HEK293 (cell line): ENCODE measurements at regions of chr7 and their contacts with region 1.

Region 1: GRCh38 chr7:150974468-150975391 is 3.4 kb downstream of the KCNH2 start:
- H3K4me3 ChIP-seq: peak overlapping the region; percentile 51
- H3K27ac ChIP-seq: peak overlapping the region; percentile 32; the same call in 1 of the 2 replicates
- H3K4me1 ChIP-seq: no peaks in the 10 kb centered on the region; the same call in 1 of the 2 replicates
- CTCF ChIP-seq: peak; percentile 80

Region 2: DNA sequence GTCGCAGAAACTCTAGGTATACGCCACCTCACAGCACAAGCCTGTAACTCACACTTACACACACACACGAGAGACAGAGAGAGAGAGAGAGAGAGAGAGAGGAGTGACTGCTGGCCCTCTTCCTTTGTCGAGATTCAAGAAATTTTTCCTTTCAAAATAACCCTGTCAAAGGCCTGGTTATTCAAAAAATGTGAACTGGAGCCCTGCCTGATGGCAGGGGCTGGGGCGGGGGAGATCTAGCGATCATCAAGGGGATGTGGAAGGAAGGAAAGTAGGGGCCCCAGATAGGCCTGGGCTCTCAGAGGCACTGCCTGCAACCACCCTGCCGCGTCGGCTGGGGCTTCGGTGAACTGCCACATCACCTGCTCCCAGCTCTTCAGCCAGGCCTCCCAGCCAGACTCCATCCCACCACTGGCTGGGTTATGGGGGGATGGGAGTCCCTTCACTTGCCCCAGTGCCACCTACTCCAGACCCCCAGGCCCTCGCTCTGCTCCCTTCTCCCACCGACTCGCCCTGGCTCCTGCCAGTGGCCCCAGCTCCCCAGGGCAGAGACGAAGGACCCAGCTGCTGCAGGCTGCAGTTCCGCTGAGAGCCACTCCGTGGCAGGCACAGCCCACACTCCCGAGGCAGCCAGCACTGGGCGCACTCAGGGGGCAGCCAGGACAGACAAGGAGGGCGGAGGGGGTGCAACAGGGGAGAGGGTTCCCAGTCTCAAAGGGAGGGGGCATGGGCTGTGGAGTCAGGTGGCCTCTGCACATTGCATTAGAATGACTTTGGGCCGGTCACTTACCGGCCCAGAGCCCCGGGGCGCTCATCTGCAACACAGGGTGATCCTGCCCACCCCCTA is 12.0 kb before region 1 on chr7:
- CTCF ChIA-PET with region 1: interaction called, 21 read pairs
- POLR2A ChIA-PET with region 1: interaction called, 4 read pairs
- H3K4me3 ChIP-seq: no peak overlapping the region
- H3K27ac ChIP-seq: no peak overlapping the region
- H3K4me1 ChIP-seq: no peaks in the 10 kb centered on the region
- CTCF ChIP-seq: peak; percentile 92